Motor neuron (in vitro differentiated cells): ENCODE measurements at regions of chr3 and their contacts with region 1.

Region 1: GRCh38 chr3:21894459-21895340 is 143.7 kb upstream of the ZNF385D start:
- ATAC-seq: peak in 1 of 8 experiments; percentile 15
- H3K4me3 ChIP-seq: no peak overlapping the region
- H3K27ac ChIP-seq: no peak overlapping the region
- H3K4me1 ChIP-seq: no peaks in the 10 kb centered on the region

Region 2: DNA sequence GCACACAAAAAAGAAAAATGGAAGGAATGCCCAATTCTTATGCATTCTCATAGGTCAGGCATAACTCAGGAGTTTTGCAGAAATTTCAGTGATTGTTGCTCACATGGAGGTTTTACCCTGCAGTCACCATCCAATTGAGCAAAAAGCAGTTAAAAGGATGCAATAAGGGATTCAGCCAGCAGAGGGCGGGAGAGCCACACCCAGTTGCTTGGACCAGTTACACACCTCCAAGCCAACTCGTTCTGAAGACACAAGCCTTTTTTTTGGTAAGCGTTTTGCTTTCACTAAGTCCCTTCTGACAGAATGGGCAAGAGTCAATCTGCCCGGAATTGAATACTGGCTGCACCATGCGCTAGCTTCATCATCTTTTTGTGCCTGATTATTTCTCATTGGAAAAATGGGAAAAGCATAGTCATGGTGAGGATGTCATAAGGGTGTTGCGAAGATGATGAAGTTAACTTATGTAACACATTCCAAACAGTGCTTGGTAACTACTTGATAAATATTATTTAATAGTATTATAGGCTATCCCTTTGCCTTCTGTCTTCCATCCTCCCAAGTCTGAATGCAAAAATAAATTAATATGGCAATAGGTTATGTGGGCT is 1554.3 kb before region 1 on chr3:
- in situ Hi-C with region 1: loop called in 1 of 9 experiments (anchors 25 kb)
- ATAC-seq: peak; percentile 60 to 89 (median 78)
- H3K4me3 ChIP-seq: no peak overlapping the region
- H3K27ac ChIP-seq: no peak overlapping the region
- H3K4me1 ChIP-seq: no peaks in the 10 kb centered on the region

Region 3: GRCh38 chr3:21484057-21484827 is 410.5 kb before region 1 on chr3:
- in situ Hi-C with region 1: loop called in 1 of 9 experiments (anchors 25 kb)
- ATAC-seq: peak in 4 of 8 experiments; percentile 62 to 99 (median 84)
- H3K4me3 ChIP-seq: no peak overlapping the region
- H3K27ac ChIP-seq: no peak overlapping the region
- H3K4me1 ChIP-seq: no peaks in the 10 kb centered on the region

Region 4: DNA sequence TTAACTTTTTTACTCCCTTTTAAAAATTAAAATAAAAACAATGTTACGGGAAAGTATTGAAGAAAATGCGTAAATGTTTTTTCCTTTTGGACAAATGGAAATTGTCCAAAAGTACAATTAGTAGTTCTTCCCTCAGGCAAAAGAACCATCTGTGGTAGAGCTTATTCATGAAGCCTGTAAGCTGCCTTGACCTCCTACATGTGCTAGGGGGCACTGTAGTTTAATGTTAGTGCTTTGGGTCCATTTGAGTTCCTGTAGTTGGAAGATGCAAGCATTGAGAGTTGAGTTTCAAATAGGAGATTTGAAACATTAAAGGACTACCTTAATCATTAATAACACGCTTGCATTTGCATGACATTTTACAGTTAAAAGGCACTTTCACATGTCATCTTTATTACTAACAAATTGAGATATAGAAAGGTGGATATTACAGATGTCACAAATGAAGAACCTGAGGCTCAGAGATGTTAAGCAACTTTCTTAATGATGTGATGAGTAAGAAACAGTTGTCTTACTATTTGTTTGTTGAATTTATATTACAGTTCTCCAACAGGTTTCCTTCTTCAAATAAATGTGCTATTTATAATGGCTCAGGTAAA is 141.9 kb before region 1 on chr3:
- in situ Hi-C with region 1: loop called in 3 of 9 experiments (anchors 10 to 25 kb)
- ATAC-seq: peak in 3 of 8 experiments; percentile 56 to 69 (median 56)
- H3K4me3 ChIP-seq: no peak overlapping the region
- H3K27ac ChIP-seq: no peak overlapping the region
- H3K4me1 ChIP-seq: peaks cover 19 to 30% of the 10 kb centered on the region in 2 donors

Region 5: DNA sequence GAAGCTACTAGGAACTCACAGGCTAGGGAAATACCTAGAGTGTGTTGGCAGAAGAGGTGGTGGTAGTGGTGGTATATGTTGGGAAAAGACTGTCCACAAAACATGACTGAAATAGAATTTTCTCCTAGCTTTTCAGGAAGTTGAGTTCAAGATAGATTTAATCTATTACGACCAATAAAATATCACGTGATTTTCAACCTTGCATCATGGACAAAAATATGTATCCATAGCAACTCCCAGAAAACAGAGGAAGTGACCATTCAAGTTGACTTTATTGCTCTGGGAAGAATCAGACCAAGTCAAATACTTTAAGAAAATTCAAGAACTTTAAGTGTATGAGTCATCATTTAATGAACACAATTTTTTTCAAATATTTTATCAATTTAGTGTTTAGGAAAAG is 203.3 kb after region 1 on chr3:
- in situ Hi-C with region 1: no loop called
- ATAC-seq: no peak
- H3K4me3 ChIP-seq: no peak overlapping the region
- H3K27ac ChIP-seq: no peak overlapping the region
- H3K4me1 ChIP-seq: no peaks in the 10 kb centered on the region